ENCODE measurements at regions of chr18 and their contacts with region 1.

Region 1: GRCh38 chr18:2894131-2894840 is 47.5 kb downstream of the EMILIN2 start:
- DNase-seq: no peak
- H3K4me3 Mint-ChIP-seq: no peak overlapping the region
- H3K27ac Mint-ChIP-seq: no peak overlapping the region
- H3K4me1 Mint-ChIP-seq: peaks cover 41% of the 10 kb centered on the region
- H3K27me3 Mint-ChIP-seq: no peaks in the 10 kb centered on the region

Region 2: GRCh38 chr18:2180586-2180985 is 713.7 kb before region 1 on chr18:
- CTCF ChIA-PET with region 1: no interaction called
- POLR2A ChIA-PET with region 1: no interaction called
- DNase-seq: no peak
- H3K4me3 Mint-ChIP-seq: no peak overlapping the region
- H3K27ac Mint-ChIP-seq: no peak overlapping the region
- H3K4me1 Mint-ChIP-seq: no peaks in the 10 kb centered on the region
- H3K27me3 Mint-ChIP-seq: no peaks in the 10 kb centered on the region

Region 3: GRCh38 chr18:2883076-2883735 is 11.1 kb before region 1 on chr18:
- CTCF ChIA-PET with region 1: interaction called, 14 read pairs
- POLR2A ChIA-PET with region 1: no interaction called
- DNase-seq: peak; percentile 63
- H3K4me3 Mint-ChIP-seq: peak overlapping the region; percentile 34
- H3K27ac Mint-ChIP-seq: peak overlapping the region; percentile 95
- H3K4me1 Mint-ChIP-seq: peaks cover 36% of the 10 kb centered on the region
- H3K27me3 Mint-ChIP-seq: peaks cover 3% of the 10 kb centered on the region

Measured in activated CD4-positive, alpha-beta T cell treated with anti-CD3 and anti-CD28 coated beads, Interleukin-2, amount 10 ng/mL, durations not matched to agents 7 days and 5 days (primary cell).